ENCODE measurements at regions of chr3 and their contacts with region 1.

Region 1: DNA sequence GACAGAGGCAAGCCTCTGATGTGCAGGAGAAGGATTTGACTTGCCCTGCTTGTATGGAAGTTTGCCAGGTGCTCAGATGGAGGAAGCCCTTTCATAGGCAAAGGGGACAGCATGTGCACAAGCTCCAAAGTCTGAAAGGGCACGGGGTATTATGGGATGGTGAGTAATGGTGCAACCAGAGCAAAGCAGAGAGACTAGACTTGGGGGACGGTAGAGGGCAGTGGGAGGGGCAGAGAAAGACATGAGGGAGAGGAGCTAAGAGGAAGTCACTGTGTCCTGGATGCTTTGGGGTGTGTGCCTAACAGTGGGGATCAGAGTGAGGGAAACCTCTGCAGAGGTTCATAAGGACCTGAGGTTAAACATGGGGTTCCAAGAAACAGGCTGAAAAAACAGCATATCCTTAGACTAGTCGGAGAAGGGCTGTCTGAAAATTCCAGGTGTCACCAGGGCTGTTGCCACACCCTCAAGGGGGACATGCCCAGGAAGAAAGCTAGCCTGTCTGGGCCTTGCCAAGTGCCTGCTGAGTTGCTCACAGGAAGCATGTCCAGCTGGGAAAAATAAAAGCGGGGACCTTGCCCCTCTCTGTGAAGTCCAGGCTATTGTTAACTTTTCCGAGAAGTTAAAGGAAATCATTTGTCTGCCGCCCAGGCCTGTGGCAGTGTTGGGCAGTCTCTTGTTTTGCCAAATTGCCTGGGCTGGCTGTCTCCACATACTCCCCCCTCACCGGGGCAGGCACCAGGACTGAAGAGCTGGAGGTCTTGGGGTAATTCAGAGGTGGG is 47.1 kb downstream of the HRH1 start:
- DNase-seq: no peak
- H3K4me3 ChIP-seq: no peak overlapping the region
- H3K27ac ChIP-seq: no peak overlapping the region
- H3K4me1 ChIP-seq: peaks cover 0 to 2% (median 0%) of the 10 kb centered on the region in 4 experiments; a peak in 4 of 7 replicates
- H3K27me3 ChIP-seq: no peaks in the 10 kb centered on the region
- CTCF ChIP-seq: no peak
- EP300 ChIP-seq: no peak
- POLR2A ChIP-seq: no peak
- RAD21 ChIP-seq: no peak

Region 2: GRCh38 chr3:11161666-11162065 is 39.8 kb before region 1 on chr3:
- CTCF ChIA-PET with region 1: interaction called, 32 read pairs
- POLR2A ChIA-PET with region 1: no interaction called
- DNase-seq: no peak
- H3K4me3 ChIP-seq: no peak overlapping the region
- H3K27ac ChIP-seq: no peak overlapping the region
- H3K4me1 ChIP-seq: no peaks in the 10 kb centered on the region; a peak in 1 of 7 replicates
- H3K27me3 ChIP-seq: no peaks in the 10 kb centered on the region; a peak in 3 of 7 replicates
- CTCF ChIP-seq: peak in 2 of 3 experiments; percentile 35 to 41; a peak in 3 of 4 replicates
- EP300 ChIP-seq: no peak
- POLR2A ChIP-seq: no peak
- RAD21 ChIP-seq: peak; percentile 13 to 25; a peak in 2 of 4 replicates

Region 3: DNA sequence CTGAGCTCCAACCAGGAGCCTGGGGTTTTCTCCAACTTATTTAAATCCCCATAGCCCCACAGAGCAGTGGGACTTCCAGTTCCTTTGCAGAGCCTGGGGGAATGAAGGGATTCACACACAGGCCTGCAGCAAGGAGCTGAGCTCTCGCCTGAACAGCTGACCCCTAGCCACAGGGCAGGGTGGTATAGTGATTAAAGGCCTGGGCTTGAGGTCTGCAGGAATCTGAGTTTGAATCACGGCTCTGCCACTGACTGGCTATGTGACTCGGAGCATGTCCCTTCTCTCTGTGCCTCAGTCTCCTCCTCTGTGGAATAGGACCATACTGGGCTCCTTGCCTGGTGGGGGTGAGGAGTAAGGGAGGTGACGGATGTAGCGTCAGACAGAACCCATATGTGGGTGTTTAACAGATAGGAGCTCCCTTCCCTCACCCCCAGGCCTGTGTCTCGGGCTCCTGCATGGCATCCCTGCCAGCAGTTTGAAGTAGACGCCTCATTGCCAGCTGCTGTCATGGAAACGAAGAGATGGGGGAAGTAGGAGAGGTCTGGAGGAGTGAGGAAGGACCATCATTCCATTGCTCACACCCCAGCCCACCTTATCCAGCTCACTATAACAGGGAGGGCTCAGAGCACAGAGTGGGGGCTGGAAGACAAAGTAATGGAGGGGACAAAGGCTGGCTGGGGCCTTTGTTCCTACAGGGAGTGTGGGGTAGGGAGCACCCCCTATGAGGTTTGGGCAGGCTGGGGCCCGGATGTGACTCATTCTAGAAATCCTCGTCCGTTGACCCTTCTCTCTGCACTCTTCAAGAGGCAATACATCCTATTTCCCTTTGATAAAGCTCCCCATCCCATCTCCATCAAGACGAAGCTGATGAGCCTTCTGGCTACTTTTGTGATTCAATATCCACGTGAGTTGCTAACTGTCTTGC is 32.3 kb before region 1 on chr3:
- CTCF ChIA-PET with region 1: interaction called, 10 read pairs
- POLR2A ChIA-PET with region 1: no interaction called
- DNase-seq: no peak
- H3K4me3 ChIP-seq: no peak overlapping the region
- H3K27ac ChIP-seq: no peak overlapping the region
- H3K4me1 ChIP-seq: no peaks in the 10 kb centered on the region; a peak in 1 of 7 replicates
- H3K27me3 ChIP-seq: no peaks in the 10 kb centered on the region; a peak in 1 of 7 replicates
- CTCF ChIP-seq: no peak
- EP300 ChIP-seq: no peak
- POLR2A ChIP-seq: no peak
- RAD21 ChIP-seq: no peak

Region 4: DNA sequence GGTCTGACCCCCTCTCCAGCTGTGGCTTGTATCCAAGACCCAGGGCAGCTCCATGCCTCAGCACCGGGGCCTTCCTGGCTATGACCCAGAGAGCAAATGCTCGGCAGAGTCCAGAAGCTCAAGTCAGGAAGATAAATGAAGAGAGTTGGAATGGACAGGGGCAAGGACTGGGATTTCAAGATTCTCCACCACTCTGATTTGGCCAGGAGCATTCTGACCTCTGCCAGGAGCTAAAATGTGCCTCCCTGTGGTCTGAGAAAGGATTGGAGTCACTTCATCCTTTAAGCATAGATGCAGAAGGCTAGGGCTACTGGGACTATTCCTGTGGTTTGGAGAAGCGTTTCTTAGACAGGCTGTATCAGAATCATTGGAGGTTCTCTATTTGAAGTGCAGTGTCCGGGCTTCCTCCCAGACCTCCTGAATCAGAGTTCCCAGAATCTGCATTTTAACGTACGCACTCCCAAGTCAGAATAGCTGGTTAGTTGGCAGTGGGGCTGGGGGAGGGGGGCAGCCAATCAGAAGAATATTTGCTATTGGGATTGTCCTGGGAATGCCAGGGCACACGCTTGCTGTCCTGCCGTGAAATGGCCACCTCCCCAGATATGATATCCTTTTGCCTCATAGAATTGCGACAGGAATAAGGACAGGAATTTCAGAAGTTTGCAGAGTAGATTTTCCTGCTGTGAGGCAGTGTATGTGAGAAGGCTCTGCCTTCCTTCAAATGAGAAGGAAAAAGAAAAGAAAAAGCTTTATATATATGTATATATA is 10.3 kb after region 1 on chr3:
- CTCF ChIA-PET with region 1: interaction called, 20 read pairs
- POLR2A ChIA-PET with region 1: no interaction called
- DNase-seq: no peak
- H3K4me3 ChIP-seq: no peak overlapping the region
- H3K27ac ChIP-seq: no peak overlapping the region
- H3K4me1 ChIP-seq: no peaks in the 10 kb centered on the region
- H3K27me3 ChIP-seq: no peaks in the 10 kb centered on the region
- CTCF ChIP-seq: peak in 2 of 3 experiments; percentile 22 to 28; a peak in 2 of 4 replicates
- EP300 ChIP-seq: no peak
- POLR2A ChIP-seq: no peak
- RAD21 ChIP-seq: peak; percentile 18 to 35

Region 5: GRCh38 chr3:11226042-11226370 is 24.6 kb after region 1 on chr3:
- CTCF ChIA-PET with region 1: no interaction called
- POLR2A ChIA-PET with region 1: no interaction called
- DNase-seq: no peak
- H3K4me3 ChIP-seq: no peak overlapping the region
- H3K27ac ChIP-seq: no peak overlapping the region
- H3K4me1 ChIP-seq: no peaks in the 10 kb centered on the region
- H3K27me3 ChIP-seq: no peaks in the 10 kb centered on the region
- CTCF ChIP-seq: no peak
- EP300 ChIP-seq: no peak
- POLR2A ChIP-seq: no peak
- RAD21 ChIP-seq: no peak